ENCODE measurements at regions of chr15 and their contacts with region 1.

Region 1: DNA sequence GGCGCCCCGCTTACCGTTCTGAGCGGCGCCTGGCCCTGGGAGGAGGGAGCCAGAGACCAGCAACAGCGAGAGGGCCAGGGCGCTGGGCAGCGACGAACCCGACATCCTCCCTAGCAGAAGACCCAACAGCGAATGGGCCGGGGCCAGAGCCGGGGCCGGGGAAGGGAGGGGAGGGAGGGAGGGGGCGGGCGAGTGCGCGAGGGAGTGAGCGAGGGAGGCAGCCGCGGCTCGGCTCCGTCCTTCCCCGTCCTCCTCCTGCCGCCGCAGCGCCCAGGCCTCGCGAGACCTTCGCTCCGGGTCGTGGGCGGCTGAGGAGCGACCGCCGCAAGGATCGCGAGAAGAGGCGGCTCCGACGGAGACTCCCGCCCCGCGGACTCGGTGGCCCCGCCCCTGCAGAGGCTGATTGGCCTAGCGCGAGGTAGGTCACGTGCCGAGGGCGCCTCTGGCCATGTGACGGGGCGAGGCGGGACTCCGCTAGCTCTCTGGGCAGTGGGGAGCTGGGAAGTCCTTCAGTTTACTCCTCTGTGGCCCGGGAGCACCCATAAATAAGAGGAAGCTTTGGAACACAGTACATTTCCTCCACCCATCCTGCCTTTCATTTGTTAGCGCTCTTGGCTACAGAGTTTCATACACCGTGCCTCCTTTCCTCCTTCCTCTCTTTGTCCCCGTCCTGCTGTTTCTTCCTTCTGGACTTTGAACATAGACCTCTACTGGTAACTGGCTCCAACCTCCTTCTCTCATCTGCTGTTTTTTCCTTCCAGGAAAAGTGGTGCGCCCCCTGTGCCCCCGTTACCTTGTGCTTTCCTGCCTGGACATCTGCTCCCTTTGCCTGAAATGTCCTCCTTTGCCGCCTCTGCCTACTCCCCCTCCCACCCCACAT is at the start of gene NPTN:
- DNase-seq: peak; percentile 96 to 99 (median 97)
- ATAC-seq: peak; percentile 95
- H3K4me3 ChIP-seq: peak within 1 kb of the TSS; percentile 73
- H3K4me3 Mint-ChIP-seq: peak within 1 kb of the TSS; percentile 79 to 97 (median 90)
- H3K27ac ChIP-seq: peak within 1 kb of the TSS; percentile 74
- H3K27ac Mint-ChIP-seq: peak within 1 kb of the TSS; percentile 71 to 96 (median 85)
- H3K4me1 ChIP-seq: peaks cover 16 to 26% of the 10 kb centered on the region in 2 donors
- H3K4me1 Mint-ChIP-seq: peaks cover 33 to 59% (median 49%) of the 10 kb centered on the region in 7 donors
- H3K27me3 ChIP-seq: no peaks in the 10 kb centered on the region
- H3K27me3 Mint-ChIP-seq: peaks cover 5 to 25% (median 8%) of the 10 kb centered on the region in 5 donors
- total RNA-seq, gene NPTN: 26.8 to 48.2 (median 42.6) TPM

Region 2: DNA sequence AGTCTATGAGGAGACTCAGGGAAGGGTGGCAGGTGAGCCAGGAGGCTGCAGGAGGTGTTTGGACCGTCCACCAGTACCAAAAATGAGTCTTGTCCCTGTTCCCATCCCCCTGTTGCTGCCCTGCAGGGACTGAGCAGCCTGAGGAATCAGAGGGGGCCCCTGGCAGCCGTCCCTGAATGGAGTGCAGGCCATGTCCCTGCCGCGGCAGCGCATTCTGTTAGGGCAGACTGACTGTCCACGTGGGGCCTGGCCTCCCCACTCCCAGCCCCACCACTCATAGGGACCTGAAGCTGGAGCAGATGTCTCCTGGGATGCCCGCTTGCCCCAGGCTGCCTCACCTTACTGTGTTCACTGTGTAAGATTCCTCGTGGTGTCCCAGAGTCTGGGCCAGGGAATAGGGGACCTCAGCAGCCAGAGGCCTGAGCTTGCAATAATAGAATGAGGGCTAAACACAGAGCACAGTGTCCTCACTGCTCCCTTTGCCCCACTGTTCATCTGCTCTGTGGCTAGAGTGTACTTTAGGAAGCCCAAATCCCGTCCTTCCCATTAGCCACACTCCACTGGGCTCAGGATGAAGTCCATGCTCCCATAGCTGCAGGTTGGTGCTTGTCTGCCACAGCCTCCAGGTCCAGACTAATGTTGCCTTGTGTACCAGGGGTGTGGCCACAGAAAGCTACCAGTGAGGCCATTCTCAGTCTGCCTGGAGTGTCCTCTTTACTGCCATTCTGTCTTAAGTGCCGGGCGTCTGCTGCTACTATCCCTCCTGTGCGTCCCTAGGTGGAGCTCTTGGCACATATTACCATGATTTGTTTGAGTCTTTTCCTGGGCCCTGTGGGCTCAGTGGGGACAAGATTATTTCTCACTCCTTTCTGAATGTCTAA is 327.8 kb before region 1 on chr15:
- CTCF ChIA-PET with region 1: no interaction called
- POLR2A ChIA-PET with region 1: no interaction called
- intact Hi-C with region 1: loop called in 1 of 2 experiments (anchors 1 kb)
- DNase-seq: no peak
- ATAC-seq: peak; percentile 60
- H3K4me3 ChIP-seq: no peak overlapping the region
- H3K4me3 Mint-ChIP-seq: no peak overlapping the region
- H3K27ac ChIP-seq: no peak overlapping the region
- H3K27ac Mint-ChIP-seq: no peak overlapping the region
- H3K4me1 ChIP-seq: no peaks in the 10 kb centered on the region
- H3K4me1 Mint-ChIP-seq: peaks cover 0 to 4% (median 0%) of the 10 kb centered on the region in 7 donors
- H3K27me3 ChIP-seq: no peaks in the 10 kb centered on the region
- H3K27me3 Mint-ChIP-seq: no peaks in the 10 kb centered on the region

Region 3: DNA sequence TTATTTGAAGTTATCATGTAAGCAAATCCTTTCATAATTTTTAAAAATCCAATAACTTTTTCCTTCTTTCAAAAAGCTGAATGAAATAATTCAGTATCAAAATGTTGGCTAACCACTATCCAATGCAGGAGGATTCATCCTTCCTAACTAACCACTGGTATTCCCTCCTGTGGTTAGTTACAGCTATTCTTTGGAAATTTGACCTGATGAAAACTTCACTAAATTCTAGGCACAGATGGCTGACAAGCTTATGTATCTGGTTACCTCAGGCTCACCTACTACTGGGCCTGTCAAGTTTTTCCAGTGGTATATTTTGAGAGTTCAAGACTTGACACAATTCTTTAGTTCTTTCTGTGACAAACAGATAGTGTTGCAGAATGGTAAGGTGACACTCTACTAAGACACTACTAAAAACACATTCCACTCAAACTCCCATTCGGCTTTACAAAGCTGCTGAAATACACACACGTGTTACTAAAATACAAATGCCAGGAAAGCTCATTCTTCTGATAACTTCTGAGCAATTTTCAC is 16.0 kb before region 1 on chr15:
- CTCF ChIA-PET with region 1: interaction called, 10 read pairs
- POLR2A ChIA-PET with region 1: interaction called, 4 read pairs
- intact Hi-C with region 1: no loop called
- DNase-seq: no peak
- ATAC-seq: no peak
- H3K4me3 ChIP-seq: no peak overlapping the region
- H3K4me3 Mint-ChIP-seq: no peak overlapping the region
- H3K27ac ChIP-seq: no peak overlapping the region
- H3K27ac Mint-ChIP-seq: no peak overlapping the region
- H3K4me1 ChIP-seq: peaks cover 0 to 5% of the 10 kb centered on the region in 2 donors
- H3K4me1 Mint-ChIP-seq: peaks cover 8 to 80% (median 58%) of the 10 kb centered on the region in 7 donors
- H3K27me3 ChIP-seq: no peaks in the 10 kb centered on the region
- H3K27me3 Mint-ChIP-seq: no peaks in the 10 kb centered on the region

Region 4: GRCh38 chr15:73704869-73705645 is 71.7 kb after region 1 on chr15:
- CTCF ChIA-PET with region 1: interaction called, 10 read pairs
- POLR2A ChIA-PET with region 1: no interaction called
- intact Hi-C with region 1: loop called in 1 of 2 experiments (anchors 1 kb)
- DNase-seq: peak in 8 of 9 donors; percentile 38 to 67 (median 46)
- ATAC-seq: peak; percentile 78
- H3K4me3 ChIP-seq: no peak overlapping the region
- H3K4me3 Mint-ChIP-seq: no peak overlapping the region
- H3K27ac ChIP-seq: no peak overlapping the region
- H3K27ac Mint-ChIP-seq: no peak overlapping the region
- H3K4me1 ChIP-seq: no peaks in the 10 kb centered on the region
- H3K4me1 Mint-ChIP-seq: peaks cover 0 to 8% (median 0%) of the 10 kb centered on the region in 7 donors
- H3K27me3 ChIP-seq: no peaks in the 10 kb centered on the region
- H3K27me3 Mint-ChIP-seq: peaks cover 9 to 26% (median 19%) of the 10 kb centered on the region in 5 donors

Region 5: GRCh38 chr15:74053941-74054529 is 420.7 kb after region 1 on chr15:
- CTCF ChIA-PET with region 1: no interaction called
- POLR2A ChIA-PET with region 1: no interaction called
- intact Hi-C with region 1: no loop called
- DNase-seq: peak; percentile 38 to 73 (median 71)
- ATAC-seq: peak; percentile 99
- H3K4me3 ChIP-seq: no peak overlapping the region
- H3K4me3 Mint-ChIP-seq: peak overlapping the region in 9 of 10 donors; percentile 4 to 61 (median 46)
- H3K27ac ChIP-seq: no peak overlapping the region
- H3K27ac Mint-ChIP-seq: peak overlapping the region in 1 of 9 donors; percentile 37
- H3K4me1 ChIP-seq: peaks cover 0 to 1% of the 10 kb centered on the region in 2 donors
- H3K4me1 Mint-ChIP-seq: peaks cover 7 to 18% (median 12%) of the 10 kb centered on the region in 7 donors
- H3K27me3 ChIP-seq: no peaks in the 10 kb centered on the region
- H3K27me3 Mint-ChIP-seq: no peaks in the 10 kb centered on the region

Region 6: DNA sequence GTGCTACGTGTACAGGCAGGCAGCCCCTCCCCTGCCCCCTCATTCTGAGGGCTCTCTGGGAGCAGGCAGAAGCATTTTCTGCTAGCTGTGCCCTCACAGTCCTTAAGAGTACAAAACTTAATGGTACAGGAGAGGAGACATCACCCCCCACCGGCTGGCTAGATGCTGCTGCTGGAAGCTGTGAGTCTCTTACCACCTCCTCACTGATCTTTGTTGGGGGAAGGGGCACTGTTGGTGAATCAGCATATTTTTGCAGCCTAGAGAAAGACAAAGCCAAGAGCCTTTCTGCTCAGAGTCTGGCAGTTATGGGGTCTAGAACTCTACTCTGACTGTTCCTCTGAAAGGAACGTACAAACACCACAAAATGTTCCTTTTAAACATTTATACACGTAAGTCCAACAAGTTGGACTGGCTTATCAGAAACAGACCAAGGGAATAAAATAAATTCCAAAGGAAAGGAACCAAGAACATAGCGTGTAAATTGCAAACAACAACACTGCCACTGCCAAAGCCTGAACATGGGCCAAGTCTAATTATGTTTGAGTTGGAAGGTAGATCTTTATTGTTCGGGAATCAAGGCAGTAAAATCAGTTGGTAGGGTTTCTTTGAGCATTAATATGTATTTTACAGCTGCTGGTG is 1009.5 kb after region 1 on chr15:
- CTCF ChIA-PET with region 1: no interaction called
- POLR2A ChIA-PET with region 1: no interaction called
- intact Hi-C with region 1: no loop called
- DNase-seq: no peak
- ATAC-seq: no peak
- H3K4me3 ChIP-seq: no peak overlapping the region
- H3K4me3 Mint-ChIP-seq: no peak overlapping the region
- H3K27ac ChIP-seq: no peak overlapping the region
- H3K27ac Mint-ChIP-seq: peak overlapping the region in 7 of 9 donors; percentile 14 to 75 (median 43)
- H3K4me1 ChIP-seq: no peaks in the 10 kb centered on the region
- H3K4me1 Mint-ChIP-seq: peaks cover 0 to 33% (median 13%) of the 10 kb centered on the region in 7 donors
- H3K27me3 ChIP-seq: no peaks in the 10 kb centered on the region
- H3K27me3 Mint-ChIP-seq: no peaks in the 10 kb centered on the region

Measured in naive thymus-derived CD4-positive, alpha-beta T cell (primary cell).